ENCODE measurements at regions of chr19 and their contacts with region 1.

Region 1: GRCh38 chr19:45245334-45245787 is at the start of gene EXOC3L2:
- DNase-seq: no peak
- ATAC-seq: peak; percentile 32
- total RNA-seq, gene EXOC3L2: 0.97 TPM

Region 2: GRCh38 chr19:45092747-45093678 is 152.3 kb before region 1 on chr19 and contains the start of gene PPP1R37:
- intact Hi-C with region 1: loop called (anchors 5 kb)
- DNase-seq: peak; percentile 97
- ATAC-seq: peak; percentile 90
- total RNA-seq, gene PPP1R37: 15.1 TPM

Region 3: DNA sequence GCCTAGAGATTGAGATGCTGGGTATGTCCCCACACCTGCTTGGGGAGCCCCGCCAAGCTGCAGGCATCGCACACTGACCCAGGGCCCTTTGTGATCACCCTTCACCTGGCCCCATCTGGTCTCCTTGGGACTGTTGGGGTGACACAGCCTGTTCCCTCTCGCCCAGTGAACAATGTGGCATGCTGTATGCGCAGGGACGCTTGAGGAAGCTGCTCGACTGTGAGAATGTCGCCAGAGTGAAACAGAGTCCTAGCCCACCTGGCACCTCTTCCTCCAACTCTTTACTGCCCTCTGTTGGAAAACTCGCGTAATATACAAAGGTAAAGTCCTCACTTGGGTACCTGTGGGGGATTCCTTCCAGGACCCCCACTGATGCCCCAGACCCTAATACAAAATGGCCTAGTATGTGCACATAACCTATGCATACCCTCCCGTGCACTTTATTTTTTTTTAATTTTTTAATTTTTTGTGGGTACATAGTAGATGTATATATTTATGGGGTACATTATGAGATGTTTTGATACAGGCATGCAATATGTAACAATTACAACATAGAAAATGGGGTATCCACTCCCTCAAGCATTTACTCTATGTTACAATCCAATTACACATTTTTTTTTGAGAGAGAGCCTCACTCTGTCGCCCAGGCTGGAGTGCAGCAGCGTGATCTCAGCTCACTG is 57.8 kb before region 1 on chr19:
- intact Hi-C with region 1: no loop called
- DNase-seq: peak; percentile 4
- ATAC-seq: no peak

Region 4: GRCh38 chr19:45211751-45212381 is 33.5 kb before region 1 on chr19:
- intact Hi-C with region 1: loop called (anchors 5 kb)
- DNase-seq: peak; percentile 81
- ATAC-seq: peak; percentile 52

Region 5: DNA sequence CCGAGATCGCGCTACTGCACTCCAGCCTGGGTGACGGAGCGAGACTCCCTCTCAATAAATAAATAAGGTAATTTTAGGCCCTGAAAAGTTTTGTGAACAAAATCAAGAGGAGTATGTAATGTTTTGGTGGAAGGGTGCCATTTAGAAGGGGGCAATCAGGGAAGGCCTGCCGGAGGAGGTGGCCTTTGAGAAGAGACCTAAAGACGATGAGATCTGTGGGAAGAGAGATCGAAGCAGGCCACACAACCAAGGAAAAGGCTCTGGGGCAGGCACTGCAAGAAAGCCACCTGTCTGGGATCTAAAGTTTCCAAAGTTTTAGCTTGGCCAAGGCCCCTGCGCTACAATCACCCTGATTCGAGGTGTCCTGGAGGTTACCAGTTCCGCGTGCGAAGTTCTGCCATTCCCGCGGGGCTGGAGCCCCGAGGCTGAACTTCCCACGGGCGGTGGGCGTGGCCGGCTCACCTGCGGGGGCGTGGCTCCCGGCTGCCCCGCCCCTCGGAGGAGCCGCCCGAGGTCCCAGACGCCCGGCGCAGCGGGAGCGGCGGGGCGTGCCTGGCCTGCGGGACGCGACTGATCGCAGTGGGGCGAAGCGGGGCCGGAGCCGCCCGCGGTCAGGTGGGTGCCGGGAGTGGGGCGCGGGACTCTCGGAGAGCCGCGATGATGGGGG is 95.0 kb after region 1 on chr19 and contains the start of gene KLC3:
- intact Hi-C with region 1: loop called (anchors 2 kb)
- DNase-seq: no peak
- ATAC-seq: no peak
- total RNA-seq, gene KLC3: not detected

Region 6: DNA sequence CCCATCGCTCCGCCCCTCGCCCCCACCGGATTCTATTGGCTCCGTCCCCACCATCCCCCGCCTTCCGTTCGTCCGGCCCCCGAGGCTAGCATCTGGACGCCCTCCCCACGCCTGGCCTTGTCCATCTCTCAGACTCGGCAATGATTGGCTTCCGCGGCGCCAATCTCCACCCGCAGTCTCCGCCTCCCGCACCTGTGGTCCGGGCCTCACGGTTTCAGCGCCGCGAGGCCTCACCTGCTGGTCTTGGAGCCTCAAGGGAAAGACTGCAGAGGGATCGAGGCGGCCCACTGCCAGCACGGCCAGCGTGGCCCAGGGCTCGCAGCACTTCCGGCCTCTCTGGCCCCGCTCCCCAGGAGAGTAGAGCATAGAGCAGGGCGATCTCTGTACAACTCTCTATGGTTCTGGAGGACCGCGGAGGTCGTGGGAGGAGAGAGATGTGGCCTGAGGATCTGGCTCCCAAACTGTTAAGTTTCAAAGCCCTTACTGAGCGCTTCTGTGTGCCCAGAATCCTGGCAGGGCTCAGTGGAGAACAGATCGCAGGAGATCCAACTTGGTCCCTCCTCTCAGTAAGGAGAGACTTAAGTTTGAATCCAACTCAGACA is 178.3 kb after region 1 on chr19 and contains the start of gene ERCC1:
- intact Hi-C with region 1: no loop called
- DNase-seq: peak; percentile 97
- ATAC-seq: peak; percentile 85
- total RNA-seq, gene ERCC1: 166 TPM